Keratinocyte (primary cell): ENCODE measurements at regions of chr9 and their contacts with region 1.

Region 1: DNA sequence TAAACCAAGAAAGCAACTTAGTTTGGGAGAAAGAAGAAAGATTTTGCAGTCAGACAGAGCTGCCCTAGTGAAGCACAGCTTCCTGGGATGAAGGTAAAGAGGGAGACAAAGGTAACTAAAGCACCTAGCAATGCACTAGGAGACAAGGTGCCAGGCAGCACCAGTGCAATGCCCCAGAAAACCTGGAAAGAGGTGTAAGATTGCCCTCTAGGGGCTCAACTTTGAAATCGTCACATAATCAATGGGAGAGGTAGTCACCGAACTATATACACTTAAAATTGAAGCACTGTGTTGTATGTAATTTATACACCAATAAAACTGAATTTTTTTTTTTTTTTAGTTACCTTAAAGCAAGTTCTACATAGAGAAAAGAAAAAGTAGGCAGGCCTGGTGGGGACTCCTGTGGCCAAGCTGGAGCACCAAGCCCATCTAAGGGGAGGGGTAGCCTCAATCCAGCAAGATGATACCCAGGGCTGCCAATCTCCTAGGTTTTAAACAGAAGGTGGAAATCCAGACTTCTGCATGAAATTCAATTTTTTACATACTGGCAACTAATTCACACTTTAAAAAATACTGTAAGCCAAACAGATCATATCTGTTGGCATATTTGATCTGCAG is 48.2 kb downstream of the CDK5RAP2 start:
- DNase-seq: peak; percentile 17
- H3K4me3 ChIP-seq: peak overlapping the region; percentile 33 to 67 (median 62)
- H3K27ac ChIP-seq: peak overlapping the region; percentile 97
- H3K4me1 ChIP-seq: peaks cover 38% of the 10 kb centered on the region
- H3K27me3 ChIP-seq: no peaks in the 10 kb centered on the region
- CTCF ChIP-seq: peak; percentile 58 to 65 (median 65)

Region 2: DNA sequence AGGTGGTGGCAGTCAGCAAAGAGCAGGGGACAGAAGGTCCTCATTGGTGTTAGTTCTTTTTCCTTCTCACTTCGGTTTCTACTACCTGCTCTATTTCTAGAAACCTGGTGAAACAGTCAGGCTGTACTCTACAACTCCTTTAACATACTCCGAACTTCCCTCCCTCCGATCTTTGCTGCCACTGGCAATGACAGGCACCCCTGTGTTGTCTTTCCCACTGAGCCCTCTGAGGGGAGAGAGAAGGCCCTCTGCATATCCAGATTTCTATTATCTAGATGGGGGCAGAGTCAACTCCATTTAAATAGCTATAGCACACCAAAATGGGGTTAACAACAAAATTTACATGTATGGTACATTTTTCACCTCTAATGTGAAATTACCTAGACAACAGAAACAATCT is 75.6 kb before region 1 on chr9:
- dilution Hi-C with region 1: loop called (anchors 5 kb)
- DNase-seq: no peak
- H3K4me3 ChIP-seq: no peak overlapping the region
- H3K27ac ChIP-seq: no peak overlapping the region
- H3K4me1 ChIP-seq: no peaks in the 10 kb centered on the region
- H3K27me3 ChIP-seq: no peaks in the 10 kb centered on the region
- CTCF ChIP-seq: no peak